Dendritic cell treated with granulocyte-macrophage colony-stimulating factor and Interleukin-4, amounts not matched to agents 40 ng/mL and 50 ng/mL, for 4 days (primary cell): ENCODE measurements at regions of chr4 and their contacts with region 1.

Region 1: GRCh38 chr4:66606908-66607307 is 936.6 kb upstream of the EPHA5 start:
- H3K4me3 Mint-ChIP-seq: no peak overlapping the region
- H3K27ac Mint-ChIP-seq: no peak overlapping the region
- H3K4me1 Mint-ChIP-seq: no peaks in the 10 kb centered on the region
- H3K27me3 Mint-ChIP-seq: no peaks in the 10 kb centered on the region

Region 2: GRCh38 chr4:66688674-66689073 is 81.8 kb after region 1 on chr4:
- intact Hi-C with region 1: no loop called
- H3K4me3 Mint-ChIP-seq: no peak overlapping the region
- H3K27ac Mint-ChIP-seq: no peak overlapping the region
- H3K4me1 Mint-ChIP-seq: no peaks in the 10 kb centered on the region
- H3K27me3 Mint-ChIP-seq: no peaks in the 10 kb centered on the region

Region 3: GRCh38 chr4:66972087-66972486 is 365.2 kb after region 1 on chr4:
- intact Hi-C with region 1: loop called (anchors 10 kb)
- H3K4me3 Mint-ChIP-seq: no peak overlapping the region
- H3K27ac Mint-ChIP-seq: no peak overlapping the region
- H3K4me1 Mint-ChIP-seq: peaks cover 9% of the 10 kb centered on the region
- H3K27me3 Mint-ChIP-seq: peaks cover 3% of the 10 kb centered on the region